Activated naive CD4-positive, alpha-beta T cell treated with anti-CD3 and anti-CD28 coated beads for 36 hours (primary cell): ENCODE measurements at regions of chr1 and their contacts with region 1.

Region 1: DNA sequence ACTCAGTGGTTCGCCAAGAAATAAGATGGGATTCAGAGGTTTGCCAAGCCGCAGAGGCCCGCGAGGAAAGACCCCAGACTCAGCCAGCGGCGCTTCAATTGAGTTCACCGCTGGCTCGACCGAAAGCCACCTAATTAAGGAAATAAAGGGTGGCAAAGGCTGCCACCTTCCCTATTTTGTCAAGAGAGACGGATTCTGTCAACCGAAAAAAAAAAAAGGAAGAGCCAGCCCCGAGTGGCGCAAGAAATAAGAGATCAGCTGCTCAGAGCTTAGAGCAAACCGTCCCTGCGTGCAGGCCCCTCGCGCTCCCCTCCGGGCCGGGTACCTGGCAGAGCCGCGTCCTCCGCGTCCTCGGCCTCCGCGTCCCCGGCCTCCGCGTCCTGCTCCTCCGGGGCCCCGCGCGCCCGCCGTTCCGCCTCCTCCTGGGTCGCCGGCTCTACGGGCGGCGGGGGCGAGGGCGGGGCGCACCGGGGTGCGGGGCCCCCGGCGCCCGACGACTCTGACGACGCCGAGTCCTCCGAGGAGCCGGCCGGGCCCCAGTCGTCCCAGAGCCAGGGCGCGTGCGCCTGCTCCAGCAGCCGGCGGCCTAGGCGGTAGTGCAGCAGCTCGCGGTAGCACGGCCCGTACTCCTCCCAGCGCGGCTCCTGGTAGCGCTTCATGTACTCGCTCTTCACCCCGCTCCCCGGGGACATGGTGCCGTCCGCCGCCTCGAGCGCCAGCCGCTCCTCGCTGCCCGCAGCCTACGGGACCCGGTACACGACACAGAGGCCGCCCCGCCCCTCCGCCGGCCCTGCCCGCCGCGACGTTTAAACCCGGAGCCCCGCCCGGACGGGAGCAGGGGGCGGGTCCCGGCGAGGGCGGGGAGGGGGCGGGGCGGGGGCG is 832 bp downstream of the CCSAP start:
- DNase-seq: peak; percentile 82
- H3K4me3 Mint-ChIP-seq: peak overlapping the region; percentile 88
- H3K27ac Mint-ChIP-seq: peak overlapping the region; percentile 74
- H3K4me1 Mint-ChIP-seq: peaks cover 40% of the 10 kb centered on the region
- H3K27me3 Mint-ChIP-seq: peaks cover 9% of the 10 kb centered on the region

Region 2: DNA sequence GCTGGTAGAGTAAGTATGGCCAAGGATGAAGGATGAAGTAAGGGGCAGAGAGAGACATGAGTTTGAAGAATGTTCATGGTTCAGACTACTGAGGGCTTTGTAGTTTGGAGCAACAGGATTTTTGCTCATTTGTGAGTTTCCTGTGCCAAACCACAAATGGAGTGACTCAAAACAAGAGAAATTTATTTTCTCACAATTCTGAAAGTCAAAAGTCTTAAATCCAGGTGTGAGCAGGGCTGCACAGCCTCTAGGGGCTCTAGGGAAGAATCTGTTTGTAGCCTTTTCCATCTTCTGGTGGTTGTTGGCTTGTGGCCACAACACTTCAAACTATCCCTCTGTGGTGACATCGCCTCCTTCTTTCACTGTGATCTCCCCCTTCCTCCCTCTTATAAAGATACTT is 547.8 kb before region 1 on chr1:
- CTCF ChIA-PET with region 1: no interaction called
- intact Hi-C with region 1: loop called (anchors 10 kb)
- DNase-seq: peak; percentile 52
- H3K4me3 Mint-ChIP-seq: no peak overlapping the region
- H3K27ac Mint-ChIP-seq: no peak overlapping the region
- H3K4me1 Mint-ChIP-seq: peaks cover 6% of the 10 kb centered on the region
- H3K27me3 Mint-ChIP-seq: no peaks in the 10 kb centered on the region

Region 3: DNA sequence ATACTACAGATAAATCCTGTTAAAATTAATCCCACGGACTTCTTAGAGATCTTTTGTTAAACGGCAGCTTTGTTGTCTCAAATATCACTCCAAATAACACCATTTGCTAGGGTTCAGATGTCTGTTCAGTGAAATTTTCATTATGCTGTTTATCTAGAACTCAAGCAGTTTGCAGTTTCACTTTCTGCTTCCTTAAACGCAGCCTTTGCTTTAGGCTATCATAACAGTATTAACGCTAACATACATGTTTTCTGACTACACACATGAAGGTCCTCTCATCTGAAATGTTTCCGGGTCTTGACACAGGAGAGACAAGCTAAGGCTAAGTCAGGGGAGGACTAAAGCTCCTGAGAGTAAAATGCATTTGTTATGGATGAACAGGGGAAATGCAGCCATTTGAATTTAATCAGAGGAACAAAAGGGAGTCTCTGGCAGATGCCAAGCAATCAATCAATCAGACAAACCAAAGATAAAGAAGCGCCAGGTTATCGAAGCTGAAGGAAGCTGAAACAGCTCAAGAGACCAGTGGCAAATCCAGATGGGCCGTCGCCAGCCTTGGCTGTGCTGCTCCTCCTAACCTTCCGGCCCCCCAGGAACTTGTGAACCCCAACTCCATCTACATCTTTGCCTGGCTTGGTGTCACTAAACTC is 16.0 kb before region 1 on chr1:
- CTCF ChIA-PET with region 1: no interaction called
- intact Hi-C with region 1: loop called (anchors 2 kb)
- DNase-seq: no peak
- H3K4me3 Mint-ChIP-seq: peak overlapping the region; percentile 44
- H3K27ac Mint-ChIP-seq: peak overlapping the region; percentile 71
- H3K4me1 Mint-ChIP-seq: peaks cover 21% of the 10 kb centered on the region
- H3K27me3 Mint-ChIP-seq: no peaks in the 10 kb centered on the region

Region 4: DNA sequence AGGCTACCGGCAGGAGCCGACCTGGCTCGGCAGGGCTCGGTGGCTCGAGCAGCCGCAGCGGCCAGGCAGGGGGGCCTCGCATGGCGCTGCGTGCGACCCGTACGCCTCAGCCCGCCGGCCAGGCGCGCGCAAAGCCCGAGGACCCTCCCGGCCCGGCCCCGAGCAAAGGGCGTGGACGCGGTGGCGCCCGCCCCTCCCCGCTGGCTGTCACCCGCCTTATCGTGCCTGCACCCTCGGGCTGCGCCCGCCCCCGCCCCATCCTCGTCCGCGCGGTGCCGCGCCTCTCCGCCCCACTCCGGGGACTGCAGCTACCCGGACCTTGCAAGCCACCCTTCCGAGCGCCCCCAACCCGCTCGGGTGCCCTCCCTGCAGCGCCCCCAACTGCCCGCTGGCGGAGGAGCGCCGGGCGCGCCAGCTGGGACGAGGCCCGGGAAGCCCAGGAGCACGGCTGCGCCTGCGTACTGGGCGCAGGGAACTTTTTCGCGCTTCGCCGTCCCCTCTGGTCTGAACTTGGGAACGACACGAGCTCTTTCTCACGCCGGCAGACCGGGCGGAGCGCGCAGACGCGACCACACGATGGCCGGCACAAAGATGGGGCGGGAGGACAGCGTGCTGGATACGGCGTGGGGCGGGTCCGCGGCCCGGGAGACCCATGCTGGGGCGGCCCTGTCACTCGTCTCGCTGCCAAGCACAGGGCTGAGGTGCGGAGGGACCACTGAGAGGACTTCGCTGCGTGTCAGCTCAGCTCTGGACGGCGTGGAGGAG is 216.7 kb after region 1 on chr1 and contains the start of gene ABCB10:
- CTCF ChIA-PET with region 1: interaction called, 5 read pairs
- intact Hi-C with region 1: loop called (anchors 5 kb)
- DNase-seq: peak; percentile 92
- H3K4me3 Mint-ChIP-seq: peak within 1 kb of the TSS; percentile 88
- H3K27ac Mint-ChIP-seq: peak within 1 kb of the TSS; percentile 79
- H3K4me1 Mint-ChIP-seq: peaks cover 27% of the 10 kb centered on the region
- H3K27me3 Mint-ChIP-seq: no peaks in the 10 kb centered on the region
- total RNA-seq, gene ABCB10: 18.9 to 19.1 TPM

Region 5: DNA sequence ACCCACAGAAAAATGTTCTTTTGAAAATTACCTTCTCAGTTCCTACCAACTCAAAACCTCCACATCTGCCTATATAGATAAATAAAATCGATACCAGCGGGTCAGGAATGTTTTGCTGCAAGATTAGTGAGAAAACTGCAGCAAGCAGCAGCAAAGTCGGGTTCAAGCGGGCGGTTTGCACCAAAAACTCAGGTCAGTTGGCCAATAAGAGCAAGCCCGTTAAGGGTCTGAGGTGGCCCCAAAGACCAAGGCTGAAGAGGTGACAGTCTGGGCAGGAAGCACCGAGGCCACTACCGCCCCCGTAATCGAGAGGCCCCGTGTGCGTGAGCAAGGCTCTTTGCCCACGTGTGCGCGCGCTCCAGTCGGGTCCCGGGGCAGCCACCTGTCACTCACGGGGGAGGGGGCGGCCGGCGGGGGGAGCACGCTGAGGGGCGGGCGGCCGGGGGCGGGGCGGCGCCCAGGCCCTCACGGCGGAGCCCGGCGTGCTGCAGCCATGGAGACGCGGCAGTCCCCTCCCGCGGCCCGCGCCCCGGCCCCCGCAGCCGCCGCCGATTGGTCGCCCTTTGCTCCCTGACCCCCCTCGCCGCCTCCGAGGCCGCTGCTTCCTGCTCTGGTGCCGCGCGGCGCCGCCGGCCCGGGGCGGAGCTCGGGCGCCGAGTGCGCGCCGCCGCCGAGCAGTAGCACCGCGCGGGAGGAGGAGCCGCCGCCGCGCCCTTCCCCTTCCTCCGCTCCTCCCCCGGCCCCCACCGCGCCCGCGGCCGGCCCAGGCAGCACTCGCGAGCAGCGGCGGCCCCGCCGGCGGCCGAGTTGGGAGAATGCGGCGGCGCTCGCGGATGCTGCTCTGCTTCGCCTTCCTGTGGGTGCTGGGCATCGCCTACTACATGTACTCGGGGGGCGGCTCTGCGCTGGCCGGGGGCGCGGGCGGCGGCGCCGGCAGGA is 724.7 kb after region 1 on chr1 and contains the start of gene GALNT2:
- CTCF ChIA-PET with region 1: no interaction called
- intact Hi-C with region 1: loop called (anchors 2 kb)
- DNase-seq: peak; percentile 89
- H3K4me3 Mint-ChIP-seq: peak within 1 kb of the TSS; percentile 88
- H3K27ac Mint-ChIP-seq: peak within 1 kb of the TSS; percentile 83
- H3K4me1 Mint-ChIP-seq: peaks cover 44% of the 10 kb centered on the region
- H3K27me3 Mint-ChIP-seq: no peaks in the 10 kb centered on the region
- total RNA-seq, gene GALNT2: 59.8 to 62.4 TPM